RWPE1 (cell line): ENCODE measurements at regions of chr7 and their contacts with region 1.

Region 1: DNA sequence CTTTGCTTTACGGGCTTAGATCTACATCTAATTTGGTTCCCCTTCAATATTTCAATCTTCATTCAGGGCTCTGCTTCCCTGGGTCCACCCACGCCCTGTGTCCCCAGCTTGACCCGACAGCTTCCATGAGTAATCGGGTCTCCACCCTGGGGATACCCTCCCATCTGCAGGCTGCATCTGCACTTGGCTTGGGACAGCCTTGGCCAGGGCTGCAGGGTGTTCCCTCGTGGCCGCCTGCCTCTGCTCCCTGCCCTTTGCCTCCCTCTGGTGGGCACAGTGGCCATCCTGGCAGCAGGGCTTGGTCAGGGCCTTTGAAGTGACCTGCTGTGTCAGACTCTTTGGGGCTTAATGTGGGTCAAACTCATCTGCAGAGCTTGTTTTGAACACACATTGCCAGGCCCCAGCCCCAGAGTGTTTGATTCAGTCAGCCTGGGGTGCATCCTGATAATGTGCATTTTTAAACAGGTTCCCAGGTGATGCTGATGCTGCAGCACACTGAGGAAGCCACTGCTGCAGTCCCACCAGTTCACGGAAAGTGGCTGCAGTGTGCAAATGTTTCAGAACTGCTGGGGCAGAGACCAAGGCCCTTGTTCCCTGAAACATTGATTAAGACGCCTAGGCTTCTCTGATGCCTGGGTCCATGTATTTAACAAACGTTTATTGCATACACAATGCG is 80.7 kb upstream of the SEC61G start:
- DNase-seq: peak; percentile 75
- H3K27ac ChIP-seq: peak overlapping the region; percentile 21
- CTCF ChIP-seq: peak; percentile 89

Region 2: DNA sequence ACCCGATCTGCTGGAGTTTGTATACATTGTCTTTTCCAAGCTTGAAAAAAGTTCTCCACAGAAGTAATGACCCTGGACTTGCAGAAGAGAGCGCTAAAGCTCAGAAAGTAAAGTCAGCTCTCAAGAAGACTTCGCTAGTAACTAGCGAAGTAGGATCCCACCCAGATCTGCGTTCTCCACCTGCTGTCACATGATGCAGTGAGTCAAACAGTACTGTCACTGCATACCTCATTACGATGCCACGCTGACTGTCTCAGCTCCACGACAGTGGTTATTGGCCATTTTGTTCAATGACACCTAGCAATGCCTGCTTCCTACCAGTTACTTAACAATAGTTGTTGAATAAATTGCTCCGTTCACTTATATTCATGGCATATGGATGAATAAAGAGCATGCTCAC is 51.0 kb before region 1 on chr7:
- CTCF ChIA-PET with region 1: interaction called, 10 read pairs
- POLR2A ChIA-PET with region 1: no interaction called
- DNase-seq: peak; percentile 92
- H3K27ac ChIP-seq: no peak overlapping the region
- CTCF ChIP-seq: peak; percentile 83

Region 3: DNA sequence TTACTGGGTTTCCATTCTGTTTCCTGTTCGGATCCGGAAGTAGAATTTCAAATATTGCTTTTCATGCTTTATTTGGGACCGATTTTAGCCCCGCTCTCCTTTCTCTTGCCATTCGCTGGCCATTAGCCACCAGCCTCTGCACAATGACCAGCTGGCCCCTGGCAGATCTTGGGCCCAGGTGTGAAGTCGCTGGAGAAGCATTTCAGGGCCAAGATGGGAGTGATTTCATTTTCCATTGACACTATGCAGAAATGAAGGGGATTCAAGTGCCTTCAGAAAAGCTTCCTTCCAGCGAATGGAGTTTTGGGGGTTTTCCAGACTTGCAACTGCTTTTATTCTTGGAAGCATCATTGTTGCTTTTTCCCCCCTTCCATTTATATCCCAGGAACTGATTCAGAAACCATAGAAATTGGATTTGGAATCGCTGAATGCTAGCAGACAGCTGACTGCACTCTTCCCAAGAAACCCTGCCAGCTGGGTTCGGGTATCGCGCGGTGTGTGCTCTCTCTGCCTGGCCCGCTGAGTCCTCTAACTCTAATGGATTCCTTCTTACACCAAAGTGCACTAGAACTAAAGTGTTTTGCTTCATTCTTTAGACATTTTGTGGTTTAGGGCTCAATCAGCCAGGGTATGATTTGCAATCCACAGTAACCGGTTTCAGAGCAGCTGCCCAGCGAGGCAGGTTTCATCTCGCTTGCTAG is 271.1 kb after region 1 on chr7:
- CTCF ChIA-PET with region 1: no interaction called
- POLR2A ChIA-PET with region 1: no interaction called
- DNase-seq: no peak
- H3K27ac ChIP-seq: peak overlapping the region; percentile 86
- CTCF ChIP-seq: no peak